ENCODE measurements at regions of chr16 and their contacts with region 1.

Region 1: GRCh38 chr16:22190776-22191531 is 15.1 kb upstream of the EEF2K start:
- DNase-seq: peak; percentile 95
- ATAC-seq: peak; percentile 61
- H3K4me3 ChIP-seq: peak overlapping the region; percentile 72
- H3K27ac ChIP-seq: peak overlapping the region; percentile 67
- H3K4me1 ChIP-seq: peaks cover 29% of the 10 kb centered on the region
- H3K27me3 ChIP-seq: no peaks in the 10 kb centered on the region
- CTCF ChIP-seq: no peak

Region 2: GRCh38 chr16:21952793-21953540 is 238.0 kb before region 1 on chr16 and contains the start of gene UQCRC2:
- CTCF ChIA-PET with region 1: interaction called, 9 read pairs
- POLR2A ChIA-PET with region 1: no interaction called
- intact Hi-C with region 1: loop called (anchors 1 kb)
- DNase-seq: peak; percentile 86
- ATAC-seq: peak; percentile 93
- H3K4me3 ChIP-seq: peak within 1 kb of the TSS; percentile 96
- H3K27ac ChIP-seq: peak within 1 kb of the TSS; percentile 81
- H3K4me1 ChIP-seq: peaks cover 16% of the 10 kb centered on the region
- H3K27me3 ChIP-seq: no peaks in the 10 kb centered on the region
- CTCF ChIP-seq: no peak
- total RNA-seq, gene UQCRC2: 73.5 and 116 TPM in 2 replicates

Region 3: DNA sequence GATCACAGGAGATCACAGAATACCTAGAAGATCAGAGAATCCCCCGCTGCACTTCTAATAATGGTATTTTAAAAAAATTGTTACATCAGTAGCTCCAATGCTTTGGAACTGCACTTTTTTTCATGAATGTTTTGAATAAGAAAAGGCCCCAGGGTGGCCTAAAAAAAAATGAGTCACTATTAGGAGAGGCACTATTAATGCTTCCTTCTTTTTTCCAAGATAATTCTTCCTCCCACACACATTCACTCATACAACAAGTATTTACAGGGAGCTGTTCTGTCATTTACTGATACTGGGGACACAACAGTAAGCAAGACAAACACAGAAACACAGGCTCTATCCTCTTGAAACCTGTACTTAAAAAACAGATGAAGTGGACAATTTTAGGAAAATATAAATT is 189.4 kb before region 1 on chr16:
- CTCF ChIA-PET with region 1: interaction called, 7 read pairs
- POLR2A ChIA-PET with region 1: no interaction called
- intact Hi-C with region 1: loop called (anchors 2 kb)
- DNase-seq: peak; percentile 82
- ATAC-seq: peak; percentile 73
- H3K4me3 ChIP-seq: peak overlapping the region; percentile 58; the same call in 1 of the 2 replicates
- H3K27ac ChIP-seq: peak overlapping the region; percentile 95
- H3K4me1 ChIP-seq: peaks cover 30% of the 10 kb centered on the region
- H3K27me3 ChIP-seq: no peaks in the 10 kb centered on the region
- CTCF ChIP-seq: no peak

Region 4: DNA sequence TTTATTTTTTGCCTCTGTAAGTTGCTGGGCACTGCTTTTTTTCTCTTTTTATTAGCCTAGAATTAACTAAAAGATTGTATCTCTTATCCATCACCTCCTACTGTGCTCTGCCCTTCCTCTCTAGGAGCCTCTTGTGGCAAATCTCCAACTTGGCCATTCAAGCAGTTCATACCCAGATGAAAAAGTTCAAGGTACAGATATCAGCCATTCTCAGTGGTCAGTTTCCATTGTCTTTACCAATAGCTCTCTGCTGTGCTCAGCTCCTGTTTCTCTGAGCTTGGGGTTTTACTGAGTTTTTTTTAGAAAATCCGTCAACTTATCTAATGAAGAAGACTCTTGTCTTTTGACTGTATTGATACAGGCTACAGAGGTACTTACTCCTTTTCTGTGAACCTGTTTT is 167.4 kb before region 1 on chr16:
- CTCF ChIA-PET with region 1: interaction called, 7 read pairs
- POLR2A ChIA-PET with region 1: no interaction called
- intact Hi-C with region 1: loop called (anchors 1 kb)
- DNase-seq: no peak
- ATAC-seq: no peak
- H3K4me3 ChIP-seq: no peak overlapping the region
- H3K27ac ChIP-seq: no peak overlapping the region
- H3K4me1 ChIP-seq: peaks cover 49% of the 10 kb centered on the region
- H3K27me3 ChIP-seq: no peaks in the 10 kb centered on the region
- CTCF ChIP-seq: no peak

Region 5: GRCh38 chr16:22065252-22065651 is 125.7 kb before region 1 on chr16:
- CTCF ChIA-PET with region 1: no interaction called
- POLR2A ChIA-PET with region 1: no interaction called
- intact Hi-C with region 1: no loop called
- DNase-seq: no peak
- ATAC-seq: no peak
- H3K4me3 ChIP-seq: no peak overlapping the region
- H3K27ac ChIP-seq: no peak overlapping the region
- H3K4me1 ChIP-seq: no peaks in the 10 kb centered on the region
- H3K27me3 ChIP-seq: no peaks in the 10 kb centered on the region
- CTCF ChIP-seq: no peak

Region 6: DNA sequence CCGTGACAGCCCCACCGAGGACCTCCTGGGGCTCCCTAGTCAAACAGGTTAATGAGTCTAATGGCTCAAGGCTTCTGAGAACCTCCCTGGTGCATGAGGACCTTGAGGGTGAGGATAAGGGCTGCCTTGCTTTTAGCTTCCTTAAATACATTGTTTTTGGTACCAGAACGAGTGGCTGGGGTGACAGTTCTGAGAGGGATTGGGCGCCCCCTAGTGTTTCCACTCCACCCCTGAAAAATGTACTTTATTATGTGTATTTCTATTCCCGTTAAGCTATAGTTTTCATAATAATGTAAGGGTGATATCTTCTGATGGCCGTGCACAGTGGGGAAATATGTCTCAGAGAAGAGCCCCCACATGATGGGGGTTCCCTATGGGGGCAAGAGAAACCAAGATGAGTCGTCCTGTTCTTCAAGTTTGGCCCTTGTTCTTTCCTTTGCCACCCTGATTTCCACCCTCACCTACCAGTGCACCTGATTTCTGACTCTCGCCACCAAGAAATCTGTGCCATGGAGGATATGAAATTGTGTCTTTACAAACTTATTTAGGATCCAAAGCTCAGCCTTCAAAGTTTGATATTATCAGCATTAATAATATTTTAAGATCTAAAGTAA is 113.1 kb before region 1 on chr16:
- CTCF ChIA-PET with region 1: interaction called, 7 read pairs
- POLR2A ChIA-PET with region 1: no interaction called
- intact Hi-C with region 1: loop called (anchors 5 kb)
- DNase-seq: peak; percentile 66
- ATAC-seq: peak; percentile 58
- H3K4me3 ChIP-seq: no peak overlapping the region
- H3K27ac ChIP-seq: no peak overlapping the region
- H3K4me1 ChIP-seq: peaks cover 18% of the 10 kb centered on the region
- H3K27me3 ChIP-seq: no peaks in the 10 kb centered on the region
- CTCF ChIP-seq: peak; percentile 84

Region 7: DNA sequence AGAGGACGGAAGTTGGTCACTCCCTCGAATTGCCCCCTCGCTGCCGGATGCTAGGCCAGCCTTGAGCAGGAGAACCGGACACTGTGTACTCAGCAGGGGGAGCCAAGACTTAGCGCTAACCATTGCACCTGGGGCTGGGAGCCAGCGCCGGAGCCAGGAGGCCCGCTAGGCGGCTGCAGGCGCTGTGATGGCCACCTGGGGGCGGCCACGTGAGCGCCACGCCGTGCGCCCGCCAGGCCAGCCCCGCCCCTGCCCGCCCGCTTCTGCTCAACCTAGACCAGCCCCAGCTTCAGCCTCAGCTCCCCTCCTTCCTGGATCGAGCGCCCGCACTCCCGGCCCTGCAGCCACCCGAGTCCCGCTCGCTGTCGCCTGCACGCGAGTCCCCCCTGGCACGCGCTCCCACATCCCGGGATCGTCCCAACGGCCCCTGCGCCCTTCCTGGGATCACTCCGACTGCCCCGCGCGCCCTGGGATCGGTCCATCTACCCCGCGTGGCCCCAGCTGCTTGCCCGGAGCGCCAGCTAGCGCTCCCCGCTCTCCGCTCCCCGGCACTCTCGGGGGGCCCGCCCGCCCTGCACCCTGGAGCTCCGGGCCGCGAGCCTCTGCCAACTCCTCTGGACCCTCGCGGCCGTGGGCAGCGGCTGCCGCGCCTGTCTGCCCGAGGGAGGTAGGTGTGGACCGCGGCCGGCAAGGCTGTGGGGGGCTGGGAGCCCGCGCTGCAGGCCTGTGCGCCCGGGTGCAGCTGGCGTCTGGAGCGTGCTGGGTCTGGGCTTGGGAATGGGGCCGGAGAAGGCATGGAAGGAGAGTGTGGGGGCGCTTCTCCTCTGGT is 15.3 kb after region 1 on chr16 and contains the start of gene EEF2K:
- CTCF ChIA-PET with region 1: no interaction called
- POLR2A ChIA-PET with region 1: interaction called, 12 read pairs
- intact Hi-C with region 1: no loop called
- DNase-seq: peak; percentile 95
- ATAC-seq: peak; percentile 88
- H3K4me3 ChIP-seq: peak within 1 kb of the TSS; percentile 92
- H3K27ac ChIP-seq: peak within 1 kb of the TSS; percentile 72
- H3K4me1 ChIP-seq: peaks cover 15% of the 10 kb centered on the region
- H3K27me3 ChIP-seq: no peaks in the 10 kb centered on the region
- CTCF ChIP-seq: peak; percentile 56
- total RNA-seq, gene EEF2K: 9.1 and 15.0 TPM in 2 replicates

Region 8: GRCh38 chr16:22297114-22297878 is 106.3 kb after region 1 on chr16 and contains the start of gene POLR3E:
- CTCF ChIA-PET with region 1: interaction called, 5 read pairs
- POLR2A ChIA-PET with region 1: interaction called, 13 read pairs
- intact Hi-C with region 1: loop called (anchors 1 kb)
- DNase-seq: peak; percentile 95
- ATAC-seq: peak; percentile 85
- H3K4me3 ChIP-seq: peak within 1 kb of the TSS; percentile 91
- H3K27ac ChIP-seq: peak within 1 kb of the TSS; percentile 95
- H3K4me1 ChIP-seq: no peaks in the 10 kb centered on the region
- H3K27me3 ChIP-seq: no peaks in the 10 kb centered on the region
- CTCF ChIP-seq: peak; percentile 67
- total RNA-seq, gene POLR3E: 48.8 and 57.1 TPM in 2 replicates